ENCODE measurements at regions of chr12 and their contacts with region 1.

Region 1: DNA sequence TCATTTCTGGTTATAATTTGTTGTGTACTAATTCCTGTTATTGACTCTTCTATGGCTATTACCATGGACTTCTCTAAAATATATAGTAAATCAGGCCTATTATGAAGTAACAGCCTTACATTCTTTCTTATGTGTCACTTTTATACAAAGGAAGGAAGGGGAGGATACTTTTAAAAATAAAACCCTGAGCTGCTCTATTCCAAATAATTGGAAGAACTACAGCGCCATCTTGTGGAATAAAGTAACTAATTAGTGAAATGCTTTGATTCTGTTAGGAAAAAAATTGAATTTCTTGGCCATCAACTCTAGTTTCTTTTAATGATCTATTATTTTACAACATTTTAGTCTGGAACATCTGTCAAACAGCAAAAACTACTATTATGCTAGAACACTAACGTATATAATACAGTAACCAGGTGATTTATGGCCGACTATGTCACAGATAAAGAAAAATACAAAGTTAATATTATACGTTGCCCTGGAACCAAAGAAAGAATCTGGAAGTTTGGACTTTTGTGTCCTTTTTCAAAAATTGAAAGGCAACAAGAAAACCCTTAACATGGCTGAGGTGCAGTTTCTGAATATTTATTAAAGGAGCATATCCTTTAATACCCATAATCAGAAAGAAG is 55.0 kb upstream of the NELL2 start:
- DNase-seq: no peak

Region 2: GRCh38 chr12:43957732-43958372 is 973.2 kb before region 1 on chr12:
- intact Hi-C with region 1: loop called (anchors 5 kb)
- DNase-seq: peak in 25 of 42 donors; percentile 11 to 75 (median 41)

Measured in head of caudate nucleus (tissue), 42 donors.